Prostate gland (tissue), 2 donors: ENCODE measurements at regions of chr12 and their contacts with region 1.

Region 1: GRCh38 chr12:122265931-122266771 is at the start of gene VPS33A:
- DNase-seq: peak; percentile 94
- H3K4me3 ChIP-seq: peak within 1 kb of the TSS; percentile 61 to 65
- H3K27ac ChIP-seq: peak within 1 kb of the TSS; percentile 78 to 83
- H3K4me1 ChIP-seq: no peaks in the 10 kb centered on the region
- H3K27me3 ChIP-seq: no peaks in the 10 kb centered on the region
- CTCF ChIP-seq: peak in 1 of 4 experiments; percentile 14
- POLR2A ChIP-seq: peak; percentile 31
- total RNA-seq, gene VPS33A: 11.3 to 23.9 TPM

Region 2: DNA sequence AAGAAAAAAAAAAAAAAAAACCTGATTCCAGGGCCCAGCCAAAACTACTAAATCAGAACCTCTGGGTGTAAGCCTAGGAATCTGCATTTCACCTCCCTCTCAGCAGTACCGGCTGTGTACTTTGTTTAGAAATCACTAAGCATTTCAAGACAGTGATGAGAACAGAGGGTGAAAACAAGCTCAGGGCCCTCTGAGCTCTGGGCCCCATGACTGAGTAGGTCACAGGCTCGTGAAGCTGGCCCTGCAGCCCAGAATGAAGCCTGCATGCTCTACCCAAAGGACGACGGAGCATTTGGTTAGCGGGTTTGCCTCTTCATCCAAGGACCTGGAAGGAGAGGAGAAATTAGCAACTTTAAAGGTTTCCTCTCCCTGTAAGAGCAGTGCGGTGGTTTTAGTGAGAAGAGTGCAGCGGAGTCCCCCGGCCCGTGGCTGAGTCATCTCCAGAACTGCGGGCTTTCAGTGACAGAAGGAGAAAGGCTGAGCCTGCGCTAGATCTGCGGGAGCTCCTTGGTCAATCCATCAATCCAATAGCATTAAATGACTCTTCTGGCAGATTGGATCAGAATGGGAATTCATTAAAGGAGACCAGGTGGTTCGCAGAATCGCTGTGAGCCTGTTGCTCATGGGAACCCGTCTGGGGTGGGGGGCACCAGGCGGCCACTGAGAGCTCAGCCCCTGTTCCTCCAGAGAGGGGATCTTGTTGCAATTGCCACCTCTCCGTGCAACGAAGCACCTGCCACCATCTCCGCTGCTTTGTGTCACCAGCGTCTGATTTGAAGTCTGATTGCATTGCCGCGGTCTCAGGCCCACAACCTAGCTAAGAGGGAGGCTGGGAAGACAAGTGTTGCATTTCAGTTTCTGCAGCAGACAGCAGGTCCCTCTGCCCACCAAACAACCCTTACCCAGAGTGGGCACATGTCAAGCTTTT is 99.5 kb before region 1 on chr12:
- intact Hi-C with region 1: no loop called
- DNase-seq: no peak
- H3K4me3 ChIP-seq: no peak overlapping the region
- H3K27ac ChIP-seq: no peak overlapping the region
- H3K4me1 ChIP-seq: no peaks in the 10 kb centered on the region
- H3K27me3 ChIP-seq: no peaks in the 10 kb centered on the region
- CTCF ChIP-seq: no peak
- POLR2A ChIP-seq: no peak

Region 3: DNA sequence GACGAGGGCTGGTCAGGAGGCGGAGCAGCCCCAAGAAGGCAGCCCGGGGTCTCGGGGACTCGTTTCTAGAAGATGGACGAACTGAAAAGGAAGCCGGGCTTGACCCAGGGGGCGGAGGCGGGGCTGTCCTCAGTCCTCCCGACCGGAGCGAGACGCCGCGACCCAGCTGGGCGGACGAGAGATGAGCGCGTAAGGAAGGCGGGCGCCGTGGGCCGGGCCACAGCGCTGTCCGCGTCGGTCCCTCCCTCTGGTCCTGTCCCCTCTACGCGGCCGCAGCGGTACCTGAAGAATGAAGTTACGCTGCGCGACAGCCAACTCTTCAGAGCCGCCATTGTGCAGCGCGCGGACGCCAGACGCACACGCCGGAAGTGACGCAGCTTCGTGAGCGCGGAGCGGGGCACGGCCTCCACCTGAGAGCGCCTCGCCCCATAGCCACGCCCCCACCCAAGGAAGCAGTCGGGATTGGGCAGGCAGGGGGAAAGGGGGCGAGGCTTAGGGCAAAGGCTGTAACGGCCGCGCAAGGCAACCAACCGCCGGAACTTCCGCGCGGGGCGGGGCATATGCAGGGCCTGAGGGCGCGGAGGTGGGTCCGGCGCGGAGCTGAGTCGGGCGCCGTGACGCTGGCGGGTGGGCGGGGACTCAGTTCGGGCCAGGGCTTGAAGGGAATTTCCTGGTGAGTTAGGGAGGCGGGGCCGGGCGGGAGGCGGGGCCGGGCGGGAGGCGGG is 40.3 kb before region 1 on chr12 and contains the start of gene DIABLO:
- intact Hi-C with region 1: loop called (anchors 5 kb)
- DNase-seq: peak; percentile 100
- H3K4me3 ChIP-seq: peak within 1 kb of the TSS; percentile 91 to 96
- H3K27ac ChIP-seq: peak within 1 kb of the TSS; percentile 90 to 92
- H3K4me1 ChIP-seq: peaks cover 12% of the 10 kb centered on the region
- H3K27me3 ChIP-seq: no peaks in the 10 kb centered on the region
- CTCF ChIP-seq: peak in 1 of 4 experiments; percentile 20
- POLR2A ChIP-seq: peak; percentile 98
- total RNA-seq, gene DIABLO: 54.1 to 132 TPM

Region 4: GRCh38 chr12:122517877-122518276 is 251.7 kb after region 1 on chr12:
- intact Hi-C with region 1: loop called (anchors 10 kb)
- DNase-seq: no peak
- H3K4me3 ChIP-seq: no peak overlapping the region
- H3K27ac ChIP-seq: no peak overlapping the region
- H3K4me1 ChIP-seq: no peaks in the 10 kb centered on the region
- H3K27me3 ChIP-seq: no peaks in the 10 kb centered on the region
- CTCF ChIP-seq: no peak
- POLR2A ChIP-seq: no peak